ENCODE measurements at regions of chr17 and their contacts with region 1.

Region 1: GRCh38 chr17:80871341-80871740 is 120.3 kb upstream of the CHMP6 start:
- DNase-seq: no peak
- ATAC-seq: no peak
- H3K4me3 Mint-ChIP-seq: peak overlapping the region; percentile 4
- H3K27ac Mint-ChIP-seq: no peak overlapping the region
- H3K4me1 Mint-ChIP-seq: peaks cover 31% of the 10 kb centered on the region
- H3K27me3 Mint-ChIP-seq: no peaks in the 10 kb centered on the region
- CTCF ChIP-seq: no peak

Region 2: GRCh38 chr17:80649678-80650672 is 221.4 kb before region 1 on chr17:
- CTCF ChIA-PET with region 1: no interaction called
- POLR2A ChIA-PET with region 1: no interaction called
- intact Hi-C with region 1: no loop called
- DNase-seq: no peak
- ATAC-seq: peak; percentile 18
- H3K4me3 Mint-ChIP-seq: no peak overlapping the region
- H3K27ac Mint-ChIP-seq: no peak overlapping the region
- H3K4me1 Mint-ChIP-seq: peaks cover 16% of the 10 kb centered on the region
- H3K27me3 Mint-ChIP-seq: no peaks in the 10 kb centered on the region
- CTCF ChIP-seq: no peak

Region 3: DNA sequence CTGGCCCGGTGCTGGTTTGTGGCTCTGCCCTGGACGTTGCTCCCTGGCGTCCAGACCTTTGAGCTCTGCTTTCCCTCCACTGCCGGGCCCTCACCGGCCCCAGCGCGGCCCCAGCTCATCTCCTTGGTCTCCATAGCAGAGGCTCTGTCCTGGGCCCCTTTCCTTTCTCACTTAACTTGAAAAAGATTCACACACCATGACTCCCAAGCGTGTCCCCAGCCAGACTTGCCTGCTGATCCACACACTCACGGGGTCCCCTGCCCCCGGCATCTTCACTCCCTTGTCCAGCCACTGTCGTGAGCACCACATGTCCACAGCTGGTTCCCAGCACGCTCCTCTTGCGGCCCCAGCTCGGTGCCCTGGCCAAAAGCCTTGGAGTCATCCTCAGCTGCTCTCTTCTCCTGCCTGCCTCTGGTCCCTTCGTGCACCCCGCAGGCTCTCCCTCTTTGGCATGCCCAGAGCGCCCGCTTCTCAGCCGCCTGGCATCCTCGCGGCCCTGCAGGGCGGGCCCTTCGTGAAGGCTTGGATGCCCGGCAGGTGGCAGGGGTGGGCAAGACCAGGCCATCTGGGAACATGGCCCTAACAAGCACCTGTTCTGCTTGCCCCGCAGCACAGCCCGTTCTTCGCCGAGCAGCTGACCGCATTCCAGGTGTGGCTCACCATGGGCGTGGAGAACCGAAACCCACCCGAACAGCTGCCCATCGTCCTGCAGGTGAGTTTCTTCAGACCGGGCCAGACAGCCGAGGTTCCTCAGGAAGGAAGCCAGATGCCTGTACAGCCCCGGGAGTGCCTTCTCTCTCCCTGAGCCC is 25.3 kb before region 1 on chr17:
- CTCF ChIA-PET with region 1: no interaction called
- POLR2A ChIA-PET with region 1: interaction called, 16 read pairs
- intact Hi-C with region 1: no loop called
- DNase-seq: no peak
- ATAC-seq: peak; percentile 61
- H3K4me3 Mint-ChIP-seq: no peak overlapping the region
- H3K27ac Mint-ChIP-seq: no peak overlapping the region
- H3K4me1 Mint-ChIP-seq: peaks cover 36% of the 10 kb centered on the region
- H3K27me3 Mint-ChIP-seq: no peaks in the 10 kb centered on the region
- CTCF ChIP-seq: no peak